Dorsolateral prefrontal cortex (tissue), 120 donors: ENCODE measurements at regions of chr13 and their contacts with region 1.

Region 1: GRCh38 chr13:50512474-50513299 is 330.8 kb downstream of the DLEU7 start:
- DNase-seq: peak in 9 of 10 donors; percentile 40 to 66 (median 54)
- H3K4me3 ChIP-seq: peak overlapping the region; percentile 0 to 61 (median 45)
- H3K27ac ChIP-seq: peak overlapping the region; percentile 3 to 91 (median 79)
- H3K27me3 ChIP-seq: no peaks in the 10 kb centered on the region
- CTCF ChIP-seq: peak in 31 of 56 donors; percentile 5 to 45 (median 24)

Region 2: DNA sequence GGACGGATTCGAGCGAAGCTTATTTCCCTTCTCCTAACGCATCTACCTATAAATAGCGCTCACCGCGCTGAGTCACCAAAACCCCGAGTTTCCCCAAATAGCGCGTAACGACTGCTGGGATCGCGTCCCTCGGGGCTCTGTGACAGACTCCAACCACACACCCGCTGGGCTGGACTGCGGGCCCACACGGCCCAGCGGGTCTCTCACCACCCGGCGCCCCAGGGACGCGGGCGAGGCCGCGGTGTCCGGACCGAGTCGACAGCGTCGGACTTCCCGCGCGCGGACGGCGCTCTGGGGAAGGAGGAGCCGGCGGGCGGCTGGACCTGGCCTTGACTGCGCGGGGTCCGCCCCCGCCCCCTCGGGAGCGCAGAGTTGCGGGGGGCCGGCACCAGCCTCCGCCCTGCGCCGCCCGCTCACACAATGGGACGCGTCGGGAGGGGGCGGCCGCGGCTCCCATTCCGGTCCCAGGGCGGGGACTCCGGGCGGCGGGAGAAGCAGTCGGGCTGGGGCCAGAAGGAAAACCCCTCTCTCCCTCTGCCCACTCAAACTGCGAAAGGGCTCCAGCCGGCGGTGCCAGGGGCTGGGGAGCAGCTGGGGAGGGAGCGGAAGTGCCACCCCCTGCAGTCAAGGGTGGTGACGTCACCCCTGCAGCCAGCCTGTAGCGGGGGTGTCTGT is 388.7 kb before region 1 on chr13:
- intact Hi-C with region 1: loop called in 1 of 2 experiments (anchors 10 kb)
- DNase-seq: peak in 9 of 10 donors; percentile 56 to 94 (median 72)
- H3K4me3 ChIP-seq: peak overlapping the region; percentile 66 to 99 (median 96)
- H3K27ac ChIP-seq: peak overlapping the region; percentile 95 to 100 (median 100)
- H3K27me3 ChIP-seq: peaks cover 0 to 11% (median 0%) of the 10 kb centered on the region in 45 donors
- CTCF ChIP-seq: peak in 25 of 56 donors; percentile 0 to 49 (median 20)

Region 3: GRCh38 chr13:50476577-50477285 is 36.0 kb before region 1 on chr13:
- intact Hi-C with region 1: loop called in 1 of 2 experiments (anchors 5 kb)
- DNase-seq: no peak
- H3K4me3 ChIP-seq: no peak overlapping the region
- H3K27ac ChIP-seq: no peak overlapping the region
- H3K27me3 ChIP-seq: no peaks in the 10 kb centered on the region
- CTCF ChIP-seq: peak in 6 of 56 donors; percentile 13 to 35 (median 17)

Region 4: GRCh38 chr13:50529154-50529882 is 16.6 kb after region 1 on chr13:
- intact Hi-C with region 1: no loop called
- DNase-seq: peak; percentile 41 to 73 (median 70)
- H3K4me3 ChIP-seq: peak overlapping the region in 51 of 59 donors; percentile 6 to 58 (median 33)
- H3K27ac ChIP-seq: peak overlapping the region; percentile 0 to 93 (median 76)
- H3K27me3 ChIP-seq: no peaks in the 10 kb centered on the region
- CTCF ChIP-seq: peak in 6 of 56 donors; percentile 9 to 34 (median 17)